B cell (primary cell): ENCODE measurements at regions of chr17 and their contacts with region 1.

Region 1: GRCh38 chr17:5281814-5282653 is at the start of gene RABEP1:
- DNase-seq: peak; percentile 94
- ATAC-seq: peak; percentile 85
- H3K4me3 ChIP-seq: peak within 1 kb of the TSS; percentile 63 to 90 (median 75)
- H3K4me3 Mint-ChIP-seq: peak within 1 kb of the TSS; percentile 88
- H3K27ac ChIP-seq: peak within 1 kb of the TSS; percentile 33 to 69
- H3K27ac Mint-ChIP-seq: peak within 1 kb of the TSS; percentile 94
- H3K4me1 ChIP-seq: peaks cover 38 to 44% of the 10 kb centered on the region in 2 donors
- H3K4me1 Mint-ChIP-seq: peaks cover 40% of the 10 kb centered on the region
- H3K27me3 ChIP-seq: no peaks in the 10 kb centered on the region
- H3K27me3 Mint-ChIP-seq: no peaks in the 10 kb centered on the region
- CTCF ChIP-seq: peak; percentile 14
- total RNA-seq, gene RABEP1: 86.1 and 91.1 TPM in 2 replicates

Region 2: DNA sequence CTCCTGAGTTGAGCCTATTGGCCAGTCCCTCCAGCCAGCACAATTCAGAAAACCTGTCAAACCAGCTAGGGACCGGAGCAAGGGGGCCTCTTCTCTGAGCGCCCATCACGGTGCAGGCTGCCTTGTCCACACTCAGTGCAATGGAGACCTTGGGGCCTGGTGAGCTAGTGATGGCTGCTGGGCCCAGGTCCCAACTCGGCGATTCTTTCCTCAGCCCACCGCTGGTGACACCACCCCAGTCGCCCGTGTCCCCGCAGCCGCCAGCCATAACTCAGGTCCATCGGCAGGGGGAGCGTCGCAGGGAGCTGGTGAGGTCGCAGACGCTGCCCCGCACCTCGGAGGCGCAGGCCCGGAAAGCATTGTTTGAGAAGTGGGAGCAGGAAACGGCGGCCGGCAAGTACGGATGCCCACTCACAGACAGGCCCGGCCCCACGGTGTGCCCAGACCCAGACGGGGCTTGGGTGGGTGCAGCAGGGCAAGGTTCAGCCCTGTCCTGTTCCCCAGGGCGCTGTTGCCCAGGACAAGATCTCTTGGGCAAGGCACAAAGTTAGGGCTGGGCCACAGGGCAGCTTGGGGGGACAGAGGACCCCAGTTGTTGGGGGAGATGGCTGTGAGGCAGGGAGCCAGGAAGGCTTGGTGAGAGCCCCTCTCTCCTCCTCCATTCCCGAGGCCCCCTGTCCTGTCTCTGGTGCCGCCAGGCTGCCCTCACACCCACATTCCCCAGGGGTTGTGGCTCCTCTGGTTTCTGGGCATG is 686.9 kb before region 1 on chr17:
- CTCF ChIA-PET with region 1: no interaction called
- POLR2A ChIA-PET with region 1: no interaction called
- intact Hi-C with region 1: no loop called
- DNase-seq: peak; percentile 57
- ATAC-seq: no peak
- H3K4me3 ChIP-seq: no peak overlapping the region
- H3K4me3 Mint-ChIP-seq: no peak overlapping the region
- H3K27ac ChIP-seq: no peak overlapping the region
- H3K27ac Mint-ChIP-seq: no peak overlapping the region
- H3K4me1 ChIP-seq: peaks cover 0 to 4% of the 10 kb centered on the region in 2 donors
- H3K4me1 Mint-ChIP-seq: peaks cover 3% of the 10 kb centered on the region
- H3K27me3 ChIP-seq: peaks cover 0 to 19% (median 0%) of the 10 kb centered on the region in 4 experiments
- H3K27me3 Mint-ChIP-seq: peaks cover 28% of the 10 kb centered on the region
- CTCF ChIP-seq: peak; percentile 26

Region 3: GRCh38 chr17:5069724-5070123 is 212.3 kb before region 1 on chr17:
- CTCF ChIA-PET with region 1: no interaction called
- POLR2A ChIA-PET with region 1: no interaction called
- intact Hi-C with region 1: no loop called
- DNase-seq: no peak
- ATAC-seq: no peak
- H3K4me3 ChIP-seq: no peak overlapping the region
- H3K4me3 Mint-ChIP-seq: no peak overlapping the region
- H3K27ac ChIP-seq: no peak overlapping the region
- H3K27ac Mint-ChIP-seq: no peak overlapping the region
- H3K4me1 ChIP-seq: no peaks in the 10 kb centered on the region
- H3K4me1 Mint-ChIP-seq: no peaks in the 10 kb centered on the region
- H3K27me3 ChIP-seq: no peaks in the 10 kb centered on the region
- H3K27me3 Mint-ChIP-seq: peaks cover 9% of the 10 kb centered on the region
- CTCF ChIP-seq: no peak

Region 4: GRCh38 chr17:5092139-5093010 is 189.7 kb before region 1 on chr17:
- CTCF ChIA-PET with region 1: no interaction called
- POLR2A ChIA-PET with region 1: no interaction called
- intact Hi-C with region 1: no loop called
- DNase-seq: no peak
- ATAC-seq: no peak
- H3K4me3 ChIP-seq: no peak overlapping the region
- H3K4me3 Mint-ChIP-seq: no peak overlapping the region
- H3K27ac ChIP-seq: no peak overlapping the region
- H3K27ac Mint-ChIP-seq: no peak overlapping the region
- H3K4me1 ChIP-seq: peaks cover 4 to 12% of the 10 kb centered on the region in 2 donors
- H3K4me1 Mint-ChIP-seq: peaks cover 11% of the 10 kb centered on the region
- H3K27me3 ChIP-seq: peaks cover 0 to 2% (median 0%) of the 10 kb centered on the region in 4 experiments
- H3K27me3 Mint-ChIP-seq: no peaks in the 10 kb centered on the region
- CTCF ChIP-seq: no peak

Region 5: GRCh38 chr17:5254903-5255526 is 27.0 kb before region 1 on chr17:
- CTCF ChIA-PET with region 1: interaction called, 11 read pairs
- POLR2A ChIA-PET with region 1: no interaction called
- intact Hi-C with region 1: loop called (anchors 1 kb)
- DNase-seq: peak; percentile 63
- ATAC-seq: peak; percentile 84
- H3K4me3 ChIP-seq: peak overlapping the region; percentile 15 to 53 (median 21)
- H3K4me3 Mint-ChIP-seq: peak overlapping the region; percentile 82
- H3K27ac ChIP-seq: peak overlapping the region; percentile 59 to 78
- H3K27ac Mint-ChIP-seq: peak overlapping the region; percentile 92
- H3K4me1 ChIP-seq: peaks cover 40 to 50% of the 10 kb centered on the region in 2 donors
- H3K4me1 Mint-ChIP-seq: peaks cover 56% of the 10 kb centered on the region
- H3K27me3 ChIP-seq: no peaks in the 10 kb centered on the region
- H3K27me3 Mint-ChIP-seq: no peaks in the 10 kb centered on the region
- CTCF ChIP-seq: no peak

Region 6: GRCh38 chr17:5747271-5747670 is 465.2 kb after region 1 on chr17:
- CTCF ChIA-PET with region 1: no interaction called
- POLR2A ChIA-PET with region 1: no interaction called
- intact Hi-C with region 1: no loop called
- DNase-seq: no peak
- ATAC-seq: no peak
- H3K4me3 ChIP-seq: no peak overlapping the region
- H3K4me3 Mint-ChIP-seq: no peak overlapping the region
- H3K27ac ChIP-seq: no peak overlapping the region
- H3K27ac Mint-ChIP-seq: no peak overlapping the region
- H3K4me1 ChIP-seq: no peaks in the 10 kb centered on the region
- H3K4me1 Mint-ChIP-seq: no peaks in the 10 kb centered on the region
- H3K27me3 ChIP-seq: no peaks in the 10 kb centered on the region
- H3K27me3 Mint-ChIP-seq: peaks cover 13% of the 10 kb centered on the region
- CTCF ChIP-seq: no peak